Activated CD4-positive, alpha-beta memory T cell treated with anti-CD3 and anti-CD28 coated beads for 36 hours (primary cell): ENCODE measurements at regions of chr14 and their contacts with region 1.

Region 1: GRCh38 chr14:94129111-94129757 is at the start of gene IFI27L2:
- DNase-seq: peak; percentile 85
- H3K4me3 Mint-ChIP-seq: peak within 1 kb of the TSS; percentile 85
- H3K27ac Mint-ChIP-seq: peak within 1 kb of the TSS; percentile 76
- H3K4me1 Mint-ChIP-seq: peaks cover 12% of the 10 kb centered on the region
- H3K27me3 Mint-ChIP-seq: no peaks in the 10 kb centered on the region
- total RNA-seq, gene IFI27L2: 69.3 to 74.4 TPM

Region 2: GRCh38 chr14:93619176-93619793 is 509.9 kb before region 1 on chr14:
- CTCF ChIA-PET with region 1: no interaction called
- POLR2A ChIA-PET with region 1: no interaction called
- intact Hi-C with region 1: no loop called
- DNase-seq: peak; percentile 42
- H3K4me3 Mint-ChIP-seq: no peak overlapping the region
- H3K27ac Mint-ChIP-seq: no peak overlapping the region
- H3K4me1 Mint-ChIP-seq: no peaks in the 10 kb centered on the region
- H3K27me3 Mint-ChIP-seq: peaks cover 8% of the 10 kb centered on the region

Region 3: GRCh38 chr14:94021001-94021400 is 108.2 kb before region 1 on chr14:
- CTCF ChIA-PET with region 1: interaction called, 12 read pairs
- POLR2A ChIA-PET with region 1: no interaction called
- intact Hi-C with region 1: no loop called
- DNase-seq: peak; percentile 36
- H3K4me3 Mint-ChIP-seq: no peak overlapping the region
- H3K27ac Mint-ChIP-seq: peak overlapping the region; percentile 70
- H3K4me1 Mint-ChIP-seq: peaks cover 31% of the 10 kb centered on the region
- H3K27me3 Mint-ChIP-seq: no peaks in the 10 kb centered on the region

Region 4: GRCh38 chr14:94080471-94081289 is 48.6 kb before region 1 on chr14 and contains the start of gene DDX24:
- CTCF ChIA-PET with region 1: interaction called, 5 read pairs
- POLR2A ChIA-PET with region 1: interaction called, 8 read pairs
- intact Hi-C with region 1: loop called (anchors 1 kb)
- DNase-seq: peak; percentile 98
- H3K4me3 Mint-ChIP-seq: peak within 1 kb of the TSS; percentile 99
- H3K27ac Mint-ChIP-seq: peak within 1 kb of the TSS; percentile 99
- H3K4me1 Mint-ChIP-seq: peaks cover 50% of the 10 kb centered on the region
- H3K27me3 Mint-ChIP-seq: no peaks in the 10 kb centered on the region
- total RNA-seq, gene DDX24: 241 to 252 TPM

Region 5: GRCh38 chr14:94173885-94174603 is 44.8 kb after region 1 on chr14 and contains the start of gene PPP4R4:
- CTCF ChIA-PET with region 1: interaction called, 42 read pairs
- POLR2A ChIA-PET with region 1: no interaction called
- intact Hi-C with region 1: no loop called
- DNase-seq: peak; percentile 95
- H3K4me3 Mint-ChIP-seq: peak within 1 kb of the TSS; percentile 79
- H3K27ac Mint-ChIP-seq: peak within 1 kb of the TSS; percentile 73
- H3K4me1 Mint-ChIP-seq: peaks cover 39% of the 10 kb centered on the region
- H3K27me3 Mint-ChIP-seq: no peaks in the 10 kb centered on the region
- total RNA-seq, gene PPP4R4: 17.0 to 19.2 TPM

Region 6: GRCh38 chr14:94485944-94486841 is 357.0 kb after region 1 on chr14:
- CTCF ChIA-PET with region 1: interaction called, 34 read pairs
- POLR2A ChIA-PET with region 1: no interaction called
- intact Hi-C with region 1: loop called (anchors 1 kb)
- DNase-seq: peak; percentile 57
- H3K4me3 Mint-ChIP-seq: no peak overlapping the region
- H3K27ac Mint-ChIP-seq: no peak overlapping the region
- H3K4me1 Mint-ChIP-seq: peaks cover 15% of the 10 kb centered on the region
- H3K27me3 Mint-ChIP-seq: peaks cover 13% of the 10 kb centered on the region